Upper lobe of right lung (tissue), 1 donor: ENCODE measurements at regions of chr5 and their contacts with region 1.

Region 1: GRCh38 chr5:80093796-80094195 is 58.6 kb downstream of the THBS4 start:
- DNase-seq: no peak
- ATAC-seq: peak; percentile 67
- H3K4me3 ChIP-seq: no peak overlapping the region
- H3K27ac ChIP-seq: no peak overlapping the region
- H3K4me1 ChIP-seq: no peaks in the 10 kb centered on the region
- H3K27me3 ChIP-seq: no peaks in the 10 kb centered on the region
- CTCF ChIP-seq: no peak

Region 2: DNA sequence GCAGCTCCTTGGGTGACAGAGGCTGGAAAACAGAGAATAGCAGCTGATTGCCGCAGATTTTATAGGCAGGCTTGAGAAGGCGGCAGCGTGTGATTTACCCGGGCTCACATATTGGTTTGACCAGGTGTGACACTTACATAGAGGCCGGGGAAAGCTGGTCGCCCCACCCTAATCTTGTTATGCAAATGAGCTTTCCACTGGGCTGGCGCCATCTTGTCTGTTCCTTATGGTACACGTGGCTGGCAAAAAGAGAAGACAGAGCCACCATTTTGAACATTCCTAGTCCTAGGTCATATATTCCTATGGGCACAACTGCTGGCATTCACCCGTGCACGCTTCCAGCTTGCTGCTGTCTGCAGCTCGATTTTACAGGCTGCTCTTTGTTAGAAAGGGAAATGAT is 214.7 kb after region 1 on chr5:
- intact Hi-C with region 1: loop called (anchors 5 kb)
- DNase-seq: no peak
- ATAC-seq: no peak
- H3K4me3 ChIP-seq: no peak overlapping the region
- H3K27ac ChIP-seq: no peak overlapping the region
- H3K4me1 ChIP-seq: no peaks in the 10 kb centered on the region
- H3K27me3 ChIP-seq: no peaks in the 10 kb centered on the region
- CTCF ChIP-seq: no peak